Activated CD4-positive, alpha-beta memory T cell treated with anti-CD3 and anti-CD28 coated beads for 36 hours (primary cell): ENCODE measurements at regions of chr11 and their contacts with region 1.

Region 1: GRCh38 chr11:118002541-118003423 is 16.6 kb downstream of the IL10RA start:
- DNase-seq: peak; percentile 90
- H3K4me3 Mint-ChIP-seq: peak overlapping the region; percentile 56
- H3K27ac Mint-ChIP-seq: peak overlapping the region; percentile 99
- H3K4me1 Mint-ChIP-seq: peaks cover 100% of the 10 kb centered on the region
- H3K27me3 Mint-ChIP-seq: no peaks in the 10 kb centered on the region

Region 2: DNA sequence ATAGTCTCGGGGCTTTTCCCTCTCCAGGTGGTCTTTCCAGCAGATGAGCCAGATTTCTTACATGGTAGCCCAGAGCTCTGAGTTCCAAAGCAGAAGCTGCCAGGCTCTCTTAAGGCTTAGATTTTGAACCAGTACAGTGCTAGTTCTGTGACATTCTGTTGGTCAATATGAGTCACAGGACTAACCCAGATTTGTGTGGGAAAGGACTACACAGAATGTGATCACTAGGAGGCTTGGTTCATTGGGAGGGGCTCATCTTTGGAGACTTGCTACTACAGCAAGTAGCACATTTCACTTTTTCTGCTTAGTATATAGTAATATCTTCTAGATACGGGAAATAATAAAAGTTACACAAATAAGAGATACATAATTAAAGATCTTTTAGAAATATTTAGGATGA is 746.2 kb before region 1 on chr11:
- CTCF ChIA-PET with region 1: no interaction called
- POLR2A ChIA-PET with region 1: no interaction called
- intact Hi-C with region 1: no loop called
- DNase-seq: no peak
- H3K4me3 Mint-ChIP-seq: no peak overlapping the region
- H3K27ac Mint-ChIP-seq: no peak overlapping the region
- H3K4me1 Mint-ChIP-seq: no peaks in the 10 kb centered on the region
- H3K27me3 Mint-ChIP-seq: no peaks in the 10 kb centered on the region

Region 3: GRCh38 chr11:117458275-117458674 is 544.5 kb before region 1 on chr11:
- CTCF ChIA-PET with region 1: no interaction called
- POLR2A ChIA-PET with region 1: no interaction called
- intact Hi-C with region 1: loop called (anchors 5 kb)
- DNase-seq: peak; percentile 84
- H3K4me3 Mint-ChIP-seq: peak overlapping the region; percentile 30
- H3K27ac Mint-ChIP-seq: peak overlapping the region; percentile 66
- H3K4me1 Mint-ChIP-seq: peaks cover 31% of the 10 kb centered on the region
- H3K27me3 Mint-ChIP-seq: peaks cover 10% of the 10 kb centered on the region

Region 4: DNA sequence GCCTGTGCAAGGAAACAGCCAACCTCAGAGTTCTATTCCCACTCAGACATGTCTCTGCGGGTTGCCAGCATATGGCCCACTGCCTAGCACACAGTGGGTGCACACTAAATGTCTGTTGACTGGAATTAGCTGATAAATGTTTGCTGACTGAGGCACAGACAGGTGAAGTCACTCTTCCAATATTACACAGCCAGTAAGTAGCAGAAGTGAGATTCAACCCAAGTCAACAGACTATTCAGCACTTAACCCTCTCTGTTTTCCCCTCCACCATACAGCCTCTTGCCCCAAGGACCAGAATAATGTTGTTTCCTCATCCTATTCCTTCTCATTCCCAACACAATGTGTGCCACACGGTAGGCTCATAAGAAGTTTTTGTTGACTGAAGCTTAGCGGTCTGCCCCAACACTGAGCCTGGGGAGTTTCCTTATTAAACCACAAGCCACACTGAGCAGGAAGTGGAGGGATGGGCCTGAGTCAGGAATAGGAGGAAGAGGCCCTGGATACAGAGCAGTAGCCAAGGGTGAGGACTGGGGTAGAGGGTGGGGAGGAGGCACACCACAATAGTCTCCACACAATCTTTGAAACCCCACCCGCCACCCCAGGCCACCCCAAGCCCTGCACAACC is 32.3 kb before region 1 on chr11:
- CTCF ChIA-PET with region 1: no interaction called
- POLR2A ChIA-PET with region 1: interaction called, 7 read pairs
- intact Hi-C with region 1: loop called (anchors 2 kb)
- DNase-seq: peak; percentile 71
- H3K4me3 Mint-ChIP-seq: peak overlapping the region; percentile 46
- H3K27ac Mint-ChIP-seq: peak overlapping the region; percentile 89
- H3K4me1 Mint-ChIP-seq: peaks cover 66% of the 10 kb centered on the region
- H3K27me3 Mint-ChIP-seq: no peaks in the 10 kb centered on the region

Region 5: GRCh38 chr11:117985953-117986887 is 16.6 kb before region 1 on chr11 and contains the start of gene IL10RA:
- CTCF ChIA-PET with region 1: interaction called, 45 read pairs
- POLR2A ChIA-PET with region 1: interaction called, 265 read pairs
- intact Hi-C with region 1: loop called (anchors 1 kb)
- DNase-seq: peak; percentile 91
- H3K4me3 Mint-ChIP-seq: peak within 1 kb of the TSS; percentile 82
- H3K27ac Mint-ChIP-seq: peak within 1 kb of the TSS; percentile 97
- H3K4me1 Mint-ChIP-seq: peaks cover 69% of the 10 kb centered on the region
- H3K27me3 Mint-ChIP-seq: no peaks in the 10 kb centered on the region
- total RNA-seq, gene IL10RA: 114 to 117 TPM

Region 6: GRCh38 chr11:118046051-118046963 is 43.5 kb after region 1 on chr11:
- CTCF ChIA-PET with region 1: interaction called, 79 read pairs
- POLR2A ChIA-PET with region 1: interaction called, 77 read pairs
- intact Hi-C with region 1: loop called (anchors 1 kb)
- DNase-seq: peak; percentile 58
- H3K4me3 Mint-ChIP-seq: peak overlapping the region; percentile 28
- H3K27ac Mint-ChIP-seq: peak overlapping the region; percentile 91
- H3K4me1 Mint-ChIP-seq: peaks cover 91% of the 10 kb centered on the region
- H3K27me3 Mint-ChIP-seq: no peaks in the 10 kb centered on the region

Region 7: DNA sequence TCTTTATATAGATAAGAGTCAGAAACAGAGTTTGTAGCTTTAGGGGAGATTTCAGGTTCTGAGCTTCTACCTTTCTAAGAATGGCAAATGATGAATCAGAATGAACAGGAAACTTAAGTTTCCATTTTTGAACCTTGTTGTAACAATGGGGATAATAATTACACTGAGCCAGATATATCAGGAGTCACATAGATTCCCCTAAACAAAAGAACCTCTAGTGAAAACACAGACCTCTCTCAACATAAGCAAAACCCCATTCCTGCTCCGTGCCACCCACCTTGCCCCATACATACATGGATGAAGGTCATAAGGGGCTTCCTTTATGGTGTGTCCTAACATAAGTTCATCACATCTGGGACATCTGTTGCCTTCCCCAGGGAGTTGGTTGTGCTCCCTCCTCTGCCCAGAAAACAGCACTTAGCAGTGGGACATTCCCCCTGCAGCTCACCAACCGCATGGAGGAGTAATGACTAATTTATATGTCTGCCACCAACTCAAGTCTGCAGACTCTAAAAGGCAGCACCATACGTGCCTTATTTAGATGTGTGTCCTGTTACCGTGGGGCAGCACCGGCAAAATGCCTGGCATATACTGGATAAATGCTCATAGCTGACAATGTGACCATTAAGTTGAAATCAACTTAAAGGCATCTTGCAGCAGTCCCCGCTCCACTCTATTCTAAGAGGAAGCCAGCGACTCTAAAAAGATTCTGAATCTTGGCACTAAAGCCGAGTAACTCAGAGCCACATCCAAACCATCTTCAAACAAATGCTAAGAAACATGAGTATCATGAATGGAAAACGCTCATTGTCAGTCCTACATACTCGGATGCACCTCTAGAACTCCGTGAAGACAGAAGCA is 214.1 kb after region 1 on chr11:
- CTCF ChIA-PET with region 1: no interaction called
- POLR2A ChIA-PET with region 1: interaction called, 6 read pairs
- intact Hi-C with region 1: loop called (anchors 5 kb)
- DNase-seq: peak; percentile 78
- H3K4me3 Mint-ChIP-seq: peak overlapping the region; percentile 81
- H3K27ac Mint-ChIP-seq: peak overlapping the region; percentile 97
- H3K4me1 Mint-ChIP-seq: peaks cover 97% of the 10 kb centered on the region
- H3K27me3 Mint-ChIP-seq: no peaks in the 10 kb centered on the region

Region 8: DNA sequence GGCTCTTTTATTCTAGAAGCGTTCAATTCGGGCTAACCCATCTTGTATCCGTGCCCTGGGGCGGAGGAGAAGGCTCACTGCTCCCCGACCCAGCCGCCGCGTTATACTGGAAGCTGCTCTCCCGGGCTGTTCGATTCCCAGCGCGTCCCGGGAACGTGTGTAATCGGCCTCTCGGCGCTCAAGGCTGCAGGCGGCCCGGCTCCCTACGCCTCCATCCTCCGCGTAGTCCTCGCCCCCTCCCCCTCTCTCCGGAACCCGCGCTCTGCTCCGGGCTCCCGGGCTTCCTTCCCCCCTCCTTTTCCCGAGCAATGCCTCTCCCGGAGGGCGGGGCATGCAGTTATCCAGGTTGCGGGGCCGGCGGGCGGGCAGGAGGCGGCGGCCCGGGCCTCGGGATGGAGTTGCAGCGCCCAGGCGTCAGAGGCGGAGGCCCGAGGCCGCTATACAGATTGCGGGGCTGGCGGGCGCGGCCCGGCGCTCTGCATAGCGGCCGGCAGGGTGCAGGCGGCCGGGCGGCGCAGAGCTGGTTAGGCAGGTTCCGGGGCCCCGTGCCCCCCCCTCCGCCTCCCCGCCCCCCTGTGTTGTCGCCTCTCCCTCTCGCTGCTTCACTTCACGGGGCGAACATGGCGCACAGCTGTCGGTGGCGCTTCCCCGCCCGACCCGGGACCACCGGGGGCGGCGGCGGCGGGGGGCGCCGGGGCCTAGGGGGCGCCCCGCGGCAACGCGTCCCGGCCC is 433.3 kb after region 1 on chr11 and contains the start of gene KMT2A:
- CTCF ChIA-PET with region 1: no interaction called
- POLR2A ChIA-PET with region 1: no interaction called
- intact Hi-C with region 1: loop called (anchors 5 kb)
- DNase-seq: peak; percentile 95
- H3K4me3 Mint-ChIP-seq: peak within 1 kb of the TSS; percentile 91
- H3K27ac Mint-ChIP-seq: peak within 1 kb of the TSS; percentile 97
- H3K4me1 Mint-ChIP-seq: peaks cover 37% of the 10 kb centered on the region
- H3K27me3 Mint-ChIP-seq: no peaks in the 10 kb centered on the region
- total RNA-seq, gene KMT2A: 61.5 to 72.4 TPM